KBM-7 (cell line): ENCODE measurements at regions of chr12 and their contacts with region 1.

Region 1: GRCh38 chr12:94101738-94102660 is 46.4 kb upstream of the PLXNC1 start:
- DNase-seq: peak; percentile 91

Region 2: DNA sequence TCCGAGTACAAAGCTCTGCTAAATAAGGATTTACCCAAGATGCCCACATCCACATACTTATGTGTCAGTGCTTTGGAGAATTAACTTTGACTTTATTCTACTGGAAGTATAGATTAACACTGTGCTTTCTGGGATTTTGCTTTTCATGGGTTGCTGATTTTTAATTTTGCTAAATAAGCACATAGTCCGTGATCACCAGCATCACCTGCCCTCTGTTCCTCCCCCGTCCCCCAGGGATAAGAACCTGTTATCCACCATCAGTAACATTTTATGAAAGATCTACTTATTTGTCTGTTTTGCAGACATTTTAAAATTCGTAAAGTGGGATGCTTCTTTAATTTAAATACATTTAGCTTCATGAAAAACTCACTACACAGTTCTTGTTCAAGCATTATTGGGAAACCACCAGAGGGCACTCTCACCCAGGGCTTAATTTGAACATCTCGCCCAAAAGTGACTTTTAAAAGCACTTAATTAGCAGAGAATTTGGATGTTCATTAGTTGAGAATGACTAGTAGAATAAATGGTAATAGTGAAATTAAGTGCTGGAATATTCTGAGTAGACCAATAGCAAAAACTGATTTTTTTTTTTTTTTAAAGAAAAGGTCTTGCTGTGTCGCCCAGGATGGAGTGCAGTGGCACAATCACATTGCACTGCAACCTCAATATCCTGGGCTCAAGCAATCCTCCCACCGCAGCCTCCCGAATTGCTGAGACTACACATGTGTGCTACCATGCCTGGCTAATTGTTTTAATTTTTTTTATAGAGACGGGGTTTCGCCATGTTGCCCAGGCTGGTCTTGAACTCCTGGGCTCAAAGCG is 599.0 kb before region 1 on chr12:
- in situ Hi-C with region 1: loop called (anchors 25 kb)
- DNase-seq: peak; percentile 58

Region 3: DNA sequence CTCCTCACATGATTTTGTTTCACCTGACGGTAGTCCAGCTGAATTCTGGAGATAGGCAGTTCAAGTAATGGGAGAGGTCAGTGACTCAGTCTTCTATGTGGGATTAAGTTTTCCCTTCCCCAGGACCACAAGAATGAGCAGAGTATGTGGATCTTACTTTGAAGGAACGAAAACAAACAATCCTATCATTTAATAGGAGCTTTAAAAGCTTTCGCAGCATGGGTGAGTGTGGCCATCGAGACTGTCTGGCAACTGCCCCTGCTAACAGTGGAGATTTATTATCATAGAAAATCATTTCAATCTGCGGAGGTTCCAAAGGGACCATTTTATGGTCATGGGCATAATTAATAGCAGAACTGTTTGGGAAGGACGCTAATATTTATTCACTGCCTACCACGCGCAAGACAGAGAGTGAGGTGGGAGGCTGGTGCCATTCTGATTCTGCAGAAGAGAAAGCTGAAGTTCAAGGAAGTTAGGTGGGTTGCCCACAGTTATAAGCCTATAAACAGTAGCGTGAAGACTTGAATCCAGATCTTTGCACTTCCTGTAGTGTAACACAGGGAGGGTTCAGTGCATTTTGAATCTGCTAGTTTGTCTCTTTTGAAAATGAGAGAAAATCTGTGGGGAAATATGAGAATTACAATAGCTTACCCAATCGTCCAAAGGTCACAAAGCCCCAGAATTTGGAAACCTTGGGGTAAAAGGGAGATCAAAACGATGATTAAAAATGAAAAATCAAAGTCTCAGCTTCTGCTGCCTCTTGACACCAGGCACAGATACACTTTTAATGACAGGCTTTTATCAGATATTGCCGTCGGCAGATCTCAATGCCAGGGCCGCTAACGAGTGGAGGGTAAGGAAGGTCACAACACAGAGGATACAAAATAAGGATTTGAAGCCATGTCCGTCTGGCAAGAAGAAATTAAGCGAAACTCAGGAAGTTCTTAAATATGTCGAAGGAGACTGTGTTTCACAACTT is 215.2 kb before region 1 on chr12:
- in situ Hi-C with region 1: no loop called
- DNase-seq: no peak

Region 4: GRCh38 chr12:93918262-93918661 is 183.7 kb before region 1 on chr12:
- in situ Hi-C with region 1: no loop called
- DNase-seq: no peak

Region 5: DNA sequence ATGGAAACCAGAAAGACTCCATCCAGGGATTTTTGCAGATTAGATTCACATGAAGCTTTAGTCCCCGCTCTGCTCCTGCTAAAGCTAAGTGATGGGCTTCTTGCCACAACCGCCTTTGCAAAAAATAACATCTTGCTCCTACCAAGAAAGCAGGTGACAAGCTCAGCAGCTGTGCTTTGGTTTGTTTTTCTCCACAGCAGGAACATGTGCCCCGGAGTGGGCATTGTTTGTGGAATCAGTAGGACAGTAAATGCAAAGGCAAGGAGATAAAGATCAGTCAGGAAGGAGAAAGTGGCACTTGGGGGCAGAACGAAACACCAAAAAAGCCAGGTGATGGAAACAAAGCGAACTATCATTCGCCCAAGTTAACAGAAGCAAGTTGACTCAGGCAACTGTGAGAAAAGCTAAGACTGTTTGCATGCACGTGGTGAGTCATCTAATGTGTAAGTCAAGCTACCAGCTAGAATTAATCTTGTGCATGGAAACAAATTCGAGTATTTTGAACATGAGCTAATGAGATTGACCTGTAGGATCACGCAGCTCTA is 119.2 kb before region 1 on chr12:
- in situ Hi-C with region 1: loop called (anchors 10 kb)
- DNase-seq: peak; percentile 15